ENCODE measurements at regions of chr4 and their contacts with region 1.

Region 1: GRCh38 chr4:184745831-184746795 is 12.2 kb upstream of the CENPU start:
- DNase-seq: peak in 9 of 10 donors; percentile 36 to 79 (median 61)
- H3K4me3 ChIP-seq: peak overlapping the region in 5 of 59 donors; percentile 3 to 39 (median 23)
- H3K27ac ChIP-seq: peak overlapping the region in 42 of 59 donors; percentile 1 to 84 (median 42)
- H3K27me3 ChIP-seq: no peaks in the 10 kb centered on the region
- CTCF ChIP-seq: peak; percentile 54 to 94 (median 82)

Region 2: GRCh38 chr4:184805462-184806228 is 59.5 kb after region 1 on chr4:
- intact Hi-C with region 1: loop called in 1 of 2 experiments (anchors 5 kb)
- DNase-seq: peak; percentile 43 to 78 (median 68)
- H3K4me3 ChIP-seq: peak overlapping the region in 55 of 59 donors; percentile 3 to 69 (median 37)
- H3K27ac ChIP-seq: peak overlapping the region in 58 of 59 donors; percentile 42 to 97 (median 90)
- H3K27me3 ChIP-seq: no peaks in the 10 kb centered on the region
- CTCF ChIP-seq: peak in 16 of 56 donors; percentile 9 to 42 (median 20)

Region 3: GRCh38 chr4:184825896-184826690 is 80.0 kb after region 1 on chr4 and contains the start of gene ACSL1:
- intact Hi-C with region 1: loop called (anchors 5 kb)
- DNase-seq: peak; percentile 73 to 91 (median 84)
- H3K4me3 ChIP-seq: peak within 1 kb of the TSS; percentile 56 to 93 (median 77)
- H3K27ac ChIP-seq: peak within 1 kb of the TSS in 58 of 59 donors; percentile 9 to 94 (median 81)
- H3K27me3 ChIP-seq: no peaks in the 10 kb centered on the region
- CTCF ChIP-seq: peak in 4 of 56 donors; percentile 4 to 16 (median 8)
- total RNA-seq, gene ACSL1: 24.4 to 144 (median 53.4) TPM

Region 4: GRCh38 chr4:184899261-184900134 is 153.4 kb after region 1 on chr4:
- intact Hi-C with region 1: loop called in 1 of 2 experiments (anchors 10 kb)
- DNase-seq: no peak
- H3K4me3 ChIP-seq: no peak overlapping the region
- H3K27ac ChIP-seq: no peak overlapping the region
- H3K27me3 ChIP-seq: no peaks in the 10 kb centered on the region
- CTCF ChIP-seq: no peak

Region 5: DNA sequence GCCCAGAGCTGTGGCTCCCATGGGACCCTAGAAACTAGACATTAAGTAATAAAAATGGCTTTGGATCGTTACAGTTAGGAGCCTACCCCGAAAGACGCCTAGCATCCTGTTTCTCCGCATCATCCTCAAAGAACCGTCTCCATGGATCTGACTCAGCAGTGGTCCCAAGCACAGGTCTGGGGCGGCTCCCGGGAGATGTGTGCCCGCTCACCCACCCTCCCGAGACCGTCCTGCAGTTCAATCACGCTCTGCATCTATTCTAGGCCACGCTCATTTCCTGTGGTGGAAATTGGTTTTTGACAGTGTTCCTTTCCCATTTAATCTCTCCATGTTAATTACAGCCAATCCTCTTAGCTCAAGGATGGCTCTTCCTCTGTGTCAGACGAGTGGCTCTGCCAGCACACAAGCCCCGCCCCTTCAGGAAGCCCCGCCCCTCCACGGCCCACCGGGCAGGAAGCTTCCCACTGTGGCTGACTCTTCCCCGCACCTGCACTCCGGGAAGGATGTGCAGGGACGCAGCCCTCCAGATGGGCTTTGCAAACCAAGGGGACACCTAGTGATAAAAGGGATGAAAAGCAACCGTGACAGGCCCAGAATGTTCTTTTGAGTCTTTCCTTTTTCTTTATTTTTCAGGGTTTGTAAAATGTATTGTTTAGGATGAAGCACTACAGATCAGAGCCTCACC is 237.7 kb after region 1 on chr4:
- intact Hi-C with region 1: loop called (anchors 5 to 10 kb)
- DNase-seq: peak; percentile 28 to 76 (median 61)
- H3K4me3 ChIP-seq: peak overlapping the region in 46 of 59 donors; percentile 5 to 55 (median 35)
- H3K27ac ChIP-seq: peak overlapping the region in 34 of 59 donors; percentile 0 to 71 (median 43)
- H3K27me3 ChIP-seq: peaks cover 0 to 2% (median 0%) of the 10 kb centered on the region in 45 donors
- CTCF ChIP-seq: peak in 47 of 56 donors; percentile 10 to 60 (median 34)

Region 6: DNA sequence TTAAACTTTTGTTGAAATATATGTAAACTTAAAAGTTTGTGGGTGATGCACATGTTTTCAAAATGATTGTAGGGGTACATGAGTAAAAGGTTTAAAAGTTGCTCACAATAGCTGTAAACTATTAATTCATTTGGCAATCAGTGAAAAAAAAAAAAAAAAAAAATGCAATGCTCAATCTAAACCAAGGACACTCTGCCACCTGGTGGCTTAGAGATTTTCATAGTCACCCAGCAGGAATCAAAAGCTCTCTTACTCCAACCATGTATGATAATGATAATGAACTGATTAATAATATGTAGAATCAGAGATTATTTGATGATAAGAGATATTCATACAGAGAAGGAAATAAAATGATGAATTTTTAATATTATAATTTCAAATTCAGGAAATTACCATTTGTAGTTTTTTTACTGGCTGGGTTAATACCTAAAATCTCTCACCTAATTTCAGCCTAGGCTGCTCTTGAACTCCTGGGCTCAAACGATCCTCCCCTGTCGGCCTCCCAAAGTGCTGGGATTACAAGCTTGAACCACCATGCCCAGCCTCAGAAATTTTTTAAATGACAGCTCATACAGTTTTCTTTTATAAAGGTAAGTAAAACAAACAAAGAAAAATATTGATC is 350.0 kb after region 1 on chr4:
- intact Hi-C with region 1: loop called in 1 of 2 experiments (anchors 5 kb)
- DNase-seq: peak in 2 of 10 donors; percentile 7 to 34
- H3K4me3 ChIP-seq: no peak overlapping the region
- H3K27ac ChIP-seq: no peak overlapping the region
- H3K27me3 ChIP-seq: peaks cover 0 to 28% (median 0%) of the 10 kb centered on the region in 45 donors
- CTCF ChIP-seq: peak; percentile 58 to 87 (median 75)

Measured in dorsolateral prefrontal cortex (tissue), 120 donors.